Calu3 (cell line): ENCODE measurements at regions of chr1 and their contacts with region 1.

Region 1: DNA sequence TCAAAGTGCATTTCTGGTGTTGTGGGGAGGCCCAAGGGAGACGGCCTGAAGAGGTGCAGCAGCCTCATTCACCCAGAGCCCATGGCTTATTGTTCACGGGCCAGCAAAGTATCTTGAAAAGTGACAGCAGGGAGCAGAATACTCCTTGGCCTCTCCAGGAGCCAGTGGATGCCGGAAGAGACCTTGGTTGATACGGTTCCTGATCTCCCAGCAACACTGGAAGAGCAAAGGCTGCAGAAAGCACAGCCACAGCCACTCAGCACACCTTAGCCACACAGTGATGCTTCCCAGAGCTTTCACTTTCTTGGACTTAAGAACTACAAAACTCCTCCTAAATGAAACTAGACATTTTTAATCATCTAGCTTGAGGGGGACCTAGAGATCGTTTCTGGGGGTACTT is 64.3 kb upstream of the TENT5C start:
- DNase-seq: no peak
- H3K4me3 Mint-ChIP-seq: no peak overlapping the region
- H3K27ac Mint-ChIP-seq: no peak overlapping the region
- H3K4me1 Mint-ChIP-seq: peaks cover 20% of the 10 kb centered on the region
- H3K27me3 Mint-ChIP-seq: no peaks in the 10 kb centered on the region
- CTCF ChIP-seq: no peak

Region 2: GRCh38 chr1:117495068-117495467 is 46.5 kb before region 1 on chr1:
- CTCF ChIA-PET with region 1: interaction called, 11 read pairs
- intact Hi-C with region 1: no loop called
- DNase-seq: no peak
- H3K4me3 Mint-ChIP-seq: no peak overlapping the region
- H3K27ac Mint-ChIP-seq: no peak overlapping the region
- H3K4me1 Mint-ChIP-seq: no peaks in the 10 kb centered on the region
- H3K27me3 Mint-ChIP-seq: no peaks in the 10 kb centered on the region
- CTCF ChIP-seq: no peak